ENCODE measurements at regions of chr13 and their contacts with region 1.

Region 1: DNA sequence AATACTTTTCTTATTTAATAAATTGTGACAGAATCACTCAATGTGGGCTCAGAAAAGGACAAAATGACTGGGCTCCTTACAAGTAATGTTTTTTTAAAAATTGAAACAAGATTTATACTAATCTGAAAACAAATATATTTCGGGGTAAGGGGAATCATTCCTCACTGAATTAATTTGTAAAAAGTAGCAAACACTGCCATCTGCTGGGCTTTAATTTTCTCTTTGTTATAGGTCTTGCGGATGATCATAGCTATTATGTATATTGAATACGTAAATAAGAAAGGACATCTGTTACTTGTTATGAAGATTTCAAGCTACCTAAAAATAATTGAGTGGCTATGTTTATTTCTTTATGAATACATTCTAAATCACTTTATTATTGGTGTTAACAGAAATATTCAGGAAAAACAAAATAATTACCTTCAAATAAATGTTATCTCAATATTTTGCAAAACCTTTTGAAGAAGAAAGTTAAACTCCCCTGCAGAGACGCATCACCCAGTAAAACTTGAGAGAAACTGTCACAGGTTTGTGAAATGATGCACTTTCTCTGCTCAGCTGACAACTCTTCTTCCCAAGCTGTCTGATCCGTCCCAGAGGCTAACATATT is 17.8 kb upstream of the ENOX1 start:
- DNase-seq: no peak
- H3K4me3 ChIP-seq: no peak overlapping the region
- H3K27ac ChIP-seq: no peak overlapping the region
- H3K4me1 ChIP-seq: peaks cover 4% of the 10 kb centered on the region
- H3K27me3 ChIP-seq: no peaks in the 10 kb centered on the region
- CTCF ChIP-seq: peak; percentile 66

Region 2: DNA sequence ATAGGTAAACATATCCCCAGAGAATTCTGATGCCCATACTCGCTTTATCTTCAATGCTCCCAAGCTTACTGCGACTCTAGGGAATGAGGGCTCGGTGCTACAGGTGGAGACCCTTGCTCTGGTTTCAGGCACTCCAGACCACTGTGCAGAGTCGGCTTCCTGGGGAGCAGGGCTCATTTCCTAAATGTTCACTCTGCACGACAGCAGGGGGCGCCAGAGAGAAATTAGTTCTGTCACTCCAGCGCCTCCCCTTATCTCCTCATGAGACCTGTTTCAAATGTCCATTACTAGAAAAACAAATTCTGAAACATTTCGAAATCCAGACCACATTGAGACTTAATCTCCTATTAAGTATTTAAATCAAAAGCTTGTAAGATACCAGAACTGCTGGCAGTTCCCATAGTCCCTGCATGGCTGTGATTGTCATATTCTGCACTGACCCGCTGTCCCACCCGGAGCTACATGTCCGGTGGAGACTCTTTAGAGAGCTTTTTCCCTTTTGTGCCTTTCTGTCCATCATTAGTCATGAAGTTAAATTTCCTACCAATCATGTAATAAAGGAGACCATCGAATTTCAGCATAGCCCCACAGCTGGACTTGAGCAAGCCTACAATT is 834.9 kb before region 1 on chr13:
- intact Hi-C with region 1: loop called (anchors 10 kb)
- DNase-seq: peak; percentile 82
- H3K4me3 ChIP-seq: no peak overlapping the region
- H3K27ac ChIP-seq: no peak overlapping the region
- H3K4me1 ChIP-seq: peaks cover 27% of the 10 kb centered on the region
- H3K27me3 ChIP-seq: no peaks in the 10 kb centered on the region
- CTCF ChIP-seq: peak; percentile 85

Region 3: GRCh38 chr13:43196086-43196621 is 608.4 kb before region 1 on chr13:
- intact Hi-C with region 1: loop called (anchors 10 kb)
- DNase-seq: peak; percentile 41
- H3K4me3 ChIP-seq: no peak overlapping the region
- H3K27ac ChIP-seq: no peak overlapping the region
- H3K4me1 ChIP-seq: peaks cover 22% of the 10 kb centered on the region
- H3K27me3 ChIP-seq: no peaks in the 10 kb centered on the region
- CTCF ChIP-seq: peak; percentile 51

Region 4: DNA sequence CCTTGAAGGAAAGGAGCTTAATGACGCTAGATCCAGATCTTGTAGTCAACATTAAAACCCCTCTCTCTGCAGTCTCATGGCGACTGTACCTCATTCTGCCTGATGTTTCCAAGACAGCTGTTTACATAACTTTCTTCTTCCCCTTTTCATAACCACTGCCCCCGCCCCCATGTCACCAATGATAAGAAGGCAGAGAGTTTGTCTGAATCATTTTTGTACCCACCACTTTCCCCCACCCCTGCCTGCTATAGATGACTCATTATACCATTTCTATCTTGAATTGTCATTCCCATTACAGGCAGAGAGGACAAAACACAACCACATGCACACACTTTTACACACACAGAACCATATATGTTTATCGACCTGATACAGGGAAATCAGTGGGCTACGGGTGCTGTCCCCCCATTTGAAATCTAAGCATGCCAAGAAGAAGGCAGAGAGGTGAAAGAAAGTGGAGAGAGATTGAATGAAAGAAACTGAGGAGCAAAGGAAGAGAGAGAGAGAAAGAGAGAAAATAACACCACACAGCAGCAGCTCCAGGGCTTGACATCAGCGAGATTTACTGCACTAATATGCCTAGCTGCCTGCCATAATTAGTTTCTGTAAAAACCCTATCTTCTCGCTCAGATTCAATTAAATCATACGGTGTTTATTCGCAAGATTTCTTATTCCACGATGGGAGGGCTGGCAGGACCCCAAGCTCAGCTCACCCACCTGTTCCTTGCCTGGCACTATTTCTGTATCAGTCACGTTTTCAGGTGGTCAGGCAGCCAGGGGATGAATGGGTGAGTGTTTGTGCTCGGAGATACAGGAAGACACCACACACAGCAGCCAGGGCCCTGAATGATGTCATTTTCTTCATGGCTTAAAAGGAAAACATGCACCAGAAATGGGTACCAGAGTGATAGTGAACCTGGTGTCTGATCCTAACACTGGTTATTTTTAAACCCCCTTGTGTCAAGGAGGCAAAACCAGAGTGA is 454.8 kb after region 1 on chr13:
- intact Hi-C with region 1: no loop called
- DNase-seq: no peak
- H3K4me3 ChIP-seq: no peak overlapping the region
- H3K27ac ChIP-seq: peak overlapping the region; percentile 12
- H3K4me1 ChIP-seq: peaks cover 11% of the 10 kb centered on the region
- H3K27me3 ChIP-seq: no peaks in the 10 kb centered on the region
- CTCF ChIP-seq: no peak